Activated CD4-positive, alpha-beta memory T cell treated with anti-CD3 and anti-CD28 coated beads, Interleukin-2, amount 10 ng/mL, durations not matched to agents 7 days and 5 days (primary cell): ENCODE measurements at regions of chr4 and their contacts with region 1.

Region 1: GRCh38 chr4:52545099-52546069 is 113.7 kb downstream of the USP46 start:
- DNase-seq: peak; percentile 66
- H3K4me3 Mint-ChIP-seq: no peak overlapping the region
- H3K27ac Mint-ChIP-seq: no peak overlapping the region
- H3K4me1 Mint-ChIP-seq: peaks cover 1% of the 10 kb centered on the region
- H3K27me3 Mint-ChIP-seq: peaks cover 10% of the 10 kb centered on the region

Region 2: GRCh38 chr4:52665592-52665991 is 120.2 kb after region 1 on chr4:
- CTCF ChIA-PET with region 1: interaction called, 17 read pairs
- POLR2A ChIA-PET with region 1: no interaction called
- DNase-seq: no peak
- H3K4me3 Mint-ChIP-seq: no peak overlapping the region
- H3K27ac Mint-ChIP-seq: no peak overlapping the region
- H3K4me1 Mint-ChIP-seq: peaks cover 6% of the 10 kb centered on the region
- H3K27me3 Mint-ChIP-seq: peaks cover 17% of the 10 kb centered on the region

Region 3: DNA sequence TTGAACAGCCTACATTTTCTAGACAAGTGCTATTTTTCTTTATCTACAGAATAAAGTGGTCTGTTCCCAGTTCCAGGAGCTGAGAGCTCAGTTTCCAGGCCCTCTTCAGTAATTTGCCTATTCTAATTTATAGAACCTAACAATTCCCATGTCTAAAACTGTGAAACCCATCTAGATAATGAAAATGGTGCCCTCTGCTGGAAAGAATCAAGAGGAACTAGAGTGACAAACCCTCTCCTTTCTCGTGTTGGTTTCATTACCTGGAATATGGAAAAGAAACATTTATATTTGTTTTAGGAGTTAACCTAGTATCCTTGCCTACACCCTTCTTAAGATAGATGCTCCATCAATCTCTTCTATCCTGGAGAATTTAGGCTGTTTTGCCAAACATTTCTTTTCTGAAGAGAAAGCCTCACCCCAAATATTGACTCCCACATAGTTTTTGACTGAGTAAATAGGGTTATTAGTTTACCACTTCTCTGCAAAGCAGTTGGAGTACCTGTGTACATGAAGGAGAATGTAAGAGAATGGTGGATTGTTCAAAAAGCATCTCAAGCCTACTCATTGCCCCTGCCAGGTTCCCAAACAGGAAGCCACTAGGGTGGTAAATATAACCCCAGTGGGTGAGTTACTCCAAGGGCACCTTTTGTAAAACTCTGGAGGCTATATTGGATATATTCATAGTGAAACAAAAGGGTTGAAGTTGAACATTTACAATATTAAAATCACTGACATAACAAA is 438.3 kb after region 1 on chr4:
- CTCF ChIA-PET with region 1: interaction called, 58 read pairs
- POLR2A ChIA-PET with region 1: interaction called, 5 read pairs
- DNase-seq: no peak
- H3K4me3 Mint-ChIP-seq: no peak overlapping the region
- H3K27ac Mint-ChIP-seq: no peak overlapping the region
- H3K4me1 Mint-ChIP-seq: peaks cover 5% of the 10 kb centered on the region
- H3K27me3 Mint-ChIP-seq: no peaks in the 10 kb centered on the region